ENCODE measurements at regions of chr7 and their contacts with region 1.

Region 1: DNA sequence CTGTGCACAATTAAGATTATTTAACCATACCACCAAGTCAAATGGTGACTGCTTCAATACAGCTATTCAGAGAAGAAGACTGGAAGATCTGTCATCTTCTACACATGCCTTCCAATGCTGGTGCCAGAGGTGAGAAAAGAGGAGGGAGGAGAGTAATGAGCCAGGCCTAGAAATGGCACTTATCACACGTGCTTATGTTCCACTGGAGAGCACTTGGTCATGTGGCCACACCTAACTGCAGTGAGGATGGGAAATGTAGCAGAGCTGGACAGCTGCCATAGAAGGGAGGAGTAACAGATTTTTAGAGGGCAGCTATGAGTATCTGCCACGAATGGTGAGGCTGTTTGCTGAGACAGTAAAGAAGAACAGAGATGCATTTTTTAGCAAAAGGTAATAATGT is 77.1 kb downstream of the MPLKIP start:
- DNase-seq: peak; percentile 20
- ATAC-seq: no peak
- H3K4me3 ChIP-seq: no peak overlapping the region
- H3K27ac ChIP-seq: no peak overlapping the region
- H3K4me1 ChIP-seq: 0 out of 2 replicates have a peak, but pooled peaks cover 2% of the 10 kb centered on the region
- H3K27me3 ChIP-seq: no peaks in the 10 kb centered on the region
- CTCF ChIP-seq: no peak
- POLR2A ChIP-seq: no peak
- RAD21 ChIP-seq: no peak

Region 2: DNA sequence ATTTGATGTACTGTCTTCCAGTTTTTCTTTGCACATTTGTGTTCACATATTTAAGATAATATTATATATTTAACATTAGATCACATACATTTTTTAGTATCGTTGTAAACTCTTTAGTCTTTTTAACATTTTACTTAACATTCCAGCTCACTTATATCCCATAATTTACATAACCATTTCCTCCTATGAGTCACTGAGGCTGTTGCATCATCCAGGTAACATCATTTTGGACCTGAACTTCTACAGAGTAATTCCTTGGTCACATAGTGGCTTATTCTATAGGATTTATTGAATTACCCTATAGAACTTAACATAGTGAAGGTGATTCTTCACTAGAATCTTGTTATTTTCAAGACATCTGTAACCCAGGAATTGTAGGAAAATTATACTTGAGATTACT is 885.2 kb before region 1 on chr7:
- CTCF ChIA-PET with region 1: no interaction called
- POLR2A ChIA-PET with region 1: no interaction called
- dilution Hi-C with region 1: no loop called
- in situ Hi-C with region 1: no loop called
- intact Hi-C with region 1: no loop called
- DNase-seq: no peak
- ATAC-seq: no peak
- H3K4me3 ChIP-seq: no peak overlapping the region
- H3K27ac ChIP-seq: no peak overlapping the region
- H3K4me1 ChIP-seq: no peaks in the 10 kb centered on the region
- H3K27me3 ChIP-seq: no peaks in the 10 kb centered on the region
- CTCF ChIP-seq: no peak
- POLR2A ChIP-seq: no peak
- RAD21 ChIP-seq: no peak

Region 3: GRCh38 chr7:39580149-39580874 is 477.0 kb before region 1 on chr7:
- CTCF ChIA-PET with region 1: no interaction called
- POLR2A ChIA-PET with region 1: no interaction called
- dilution Hi-C with region 1: no loop called
- in situ Hi-C with region 1: loop called (anchors 10 kb)
- intact Hi-C with region 1: loop called (anchors 2 kb)
- DNase-seq: peak; percentile 97
- ATAC-seq: peak; percentile 98
- H3K4me3 ChIP-seq: no peak overlapping the region
- H3K27ac ChIP-seq: no peak overlapping the region
- H3K4me1 ChIP-seq: no peaks in the 10 kb centered on the region
- H3K27me3 ChIP-seq: no peaks in the 10 kb centered on the region
- CTCF ChIP-seq: peak; percentile 90
- POLR2A ChIP-seq: peak; percentile 38; the same call in 1 of the 2 replicates
- RAD21 ChIP-seq: peak; percentile 98

Region 4: DNA sequence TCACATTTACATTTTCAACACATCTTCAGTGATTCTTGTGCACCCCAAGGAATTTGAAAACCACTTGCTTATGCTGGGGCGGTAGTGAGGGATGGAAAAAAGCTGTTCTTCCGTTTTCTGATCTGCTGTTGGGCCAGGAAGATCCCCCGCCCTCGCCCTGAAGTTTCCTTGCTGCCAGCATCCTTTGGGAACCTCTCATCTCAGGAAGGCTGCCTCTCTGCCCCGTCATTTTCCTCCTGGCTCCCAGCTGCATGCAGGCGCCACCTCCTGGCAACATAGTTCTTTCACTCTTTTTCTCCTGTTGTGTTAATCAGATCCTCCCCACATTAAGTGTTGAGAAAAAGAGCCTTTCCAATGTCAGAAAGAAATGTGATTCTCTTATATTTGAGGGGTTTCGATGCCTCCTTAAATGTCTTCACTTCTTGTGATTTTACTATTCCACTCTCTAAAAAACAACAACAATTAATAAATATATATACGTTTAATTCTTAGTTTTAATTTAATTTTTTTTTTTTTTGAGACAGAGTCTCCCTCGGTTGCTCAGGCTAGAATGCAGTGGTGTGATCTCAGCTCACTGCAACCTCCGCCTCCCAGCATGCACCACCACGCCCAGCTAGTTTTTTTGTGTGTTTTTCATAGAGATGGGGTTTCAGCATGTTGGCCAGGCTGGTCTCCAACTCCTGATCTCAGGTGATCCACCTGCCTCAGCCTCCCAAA is 311.0 kb before region 1 on chr7:
- CTCF ChIA-PET with region 1: no interaction called
- POLR2A ChIA-PET with region 1: no interaction called
- dilution Hi-C with region 1: no loop called
- in situ Hi-C with region 1: no loop called
- intact Hi-C with region 1: loop called (anchors 5 kb)
- DNase-seq: peak; percentile 83
- ATAC-seq: peak; percentile 78
- H3K4me3 ChIP-seq: no peak overlapping the region
- H3K27ac ChIP-seq: no peak overlapping the region
- H3K4me1 ChIP-seq: peaks cover 7% of the 10 kb centered on the region
- H3K27me3 ChIP-seq: no peaks in the 10 kb centered on the region
- CTCF ChIP-seq: peak; percentile 90
- POLR2A ChIP-seq: no peak
- RAD21 ChIP-seq: peak; percentile 95

Region 5: GRCh38 chr7:39894904-39895303 is 162.4 kb before region 1 on chr7:
- CTCF ChIA-PET with region 1: interaction called, 20 read pairs
- POLR2A ChIA-PET with region 1: no interaction called
- dilution Hi-C with region 1: no loop called
- in situ Hi-C with region 1: loop called (anchors 5 kb)
- intact Hi-C with region 1: loop called (anchors 1 kb)
- DNase-seq: peak; percentile 13
- ATAC-seq: 0 out of 2 replicates have a peak, but pooled peaks have one; percentile 24
- H3K4me3 ChIP-seq: no peak overlapping the region
- H3K27ac ChIP-seq: no peak overlapping the region
- H3K4me1 ChIP-seq: no peaks in the 10 kb centered on the region
- H3K27me3 ChIP-seq: peaks cover 51% of the 10 kb centered on the region
- CTCF ChIP-seq: no peak
- POLR2A ChIP-seq: no peak
- RAD21 ChIP-seq: no peak

Measured in IMR-90 (cell line).